PC-9 (cell line): ENCODE measurements at regions of chr16 and their contacts with region 1.

Region 1: DNA sequence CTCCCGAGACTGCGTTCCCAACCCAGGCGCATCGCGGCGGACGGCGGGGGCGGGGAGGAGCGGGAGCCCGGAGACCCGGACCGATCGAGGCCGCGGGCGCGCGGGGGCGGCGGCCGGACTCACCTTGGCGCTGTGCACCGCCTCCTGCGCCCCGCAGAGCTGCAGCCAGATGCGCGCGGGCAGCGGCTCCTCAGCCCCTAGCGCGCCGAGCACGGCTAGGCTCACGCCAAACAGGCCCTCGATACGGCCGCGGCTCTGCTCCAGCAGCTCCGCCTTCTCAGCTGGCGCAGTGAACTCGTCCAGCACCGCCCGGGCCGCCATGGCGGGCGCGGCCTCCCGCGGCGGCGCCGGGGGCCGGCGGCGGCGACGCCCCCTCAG is 339 bp downstream of the N4BP1 start:
- DNase-seq: no peak
- H3K4me3 ChIP-seq: peak overlapping the region; percentile 74
- H3K27ac ChIP-seq: peak overlapping the region; percentile 99
- H3K4me1 ChIP-seq: peaks cover 45% of the 10 kb centered on the region
- H3K27me3 ChIP-seq: no peaks in the 10 kb centered on the region
- CTCF ChIP-seq: no peak

Region 2: GRCh38 chr16:48365581-48366164 is 244.0 kb before region 1 on chr16:
- CTCF ChIA-PET with region 1: no interaction called
- POLR2A ChIA-PET with region 1: no interaction called
- intact Hi-C with region 1: loop called (anchors 5 kb)
- DNase-seq: peak; percentile 77 to 92
- H3K4me3 ChIP-seq: peak overlapping the region; percentile 73
- H3K27ac ChIP-seq: peak overlapping the region; percentile 100
- H3K4me1 ChIP-seq: peaks cover 37% of the 10 kb centered on the region
- H3K27me3 ChIP-seq: no peaks in the 10 kb centered on the region
- CTCF ChIP-seq: no peak

Region 3: GRCh38 chr16:48574763-48575162 is 34.9 kb before region 1 on chr16:
- CTCF ChIA-PET with region 1: interaction called, 5 read pairs
- POLR2A ChIA-PET with region 1: interaction called, 5 read pairs
- intact Hi-C with region 1: loop called (anchors 2 kb)
- DNase-seq: peak; percentile 24 to 85
- H3K4me3 ChIP-seq: no peak overlapping the region
- H3K27ac ChIP-seq: peak overlapping the region; percentile 13; the same call in 1 of the 2 replicates
- H3K4me1 ChIP-seq: peaks cover 30% of the 10 kb centered on the region
- H3K27me3 ChIP-seq: no peaks in the 10 kb centered on the region
- CTCF ChIP-seq: no peak

Region 4: GRCh38 chr16:48641770-48642169 is 32.1 kb after region 1 on chr16:
- CTCF ChIA-PET with region 1: no interaction called
- POLR2A ChIA-PET with region 1: no interaction called
- intact Hi-C with region 1: no loop called
- DNase-seq: no peak
- H3K4me3 ChIP-seq: no peak overlapping the region
- H3K27ac ChIP-seq: no peak overlapping the region
- H3K4me1 ChIP-seq: no peaks in the 10 kb centered on the region
- H3K27me3 ChIP-seq: no peaks in the 10 kb centered on the region
- CTCF ChIP-seq: no peak